Esophagus muscularis mucosa (tissue), 4 donors: ENCODE measurements at regions of chr19 and their contacts with region 1.

Region 1: GRCh38 chr19:10870955-10871603 is at the start of gene CARM1:
- DNase-seq: peak; percentile 99
- H3K4me3 ChIP-seq: peak within 1 kb of the TSS; percentile 83 to 96 (median 94)
- H3K27ac ChIP-seq: peak within 1 kb of the TSS; percentile 86 to 89 (median 88)
- H3K4me1 ChIP-seq: peaks cover 15 to 51% (median 42%) of the 10 kb centered on the region in 4 donors
- H3K27me3 ChIP-seq: no peaks in the 10 kb centered on the region
- CTCF ChIP-seq: peak; percentile 57 to 93 (median 68)
- EP300 ChIP-seq: no peak
- POLR2A ChIP-seq: no peak
- total RNA-seq, gene CARM1: 24.9 to 43.5 (median 30.6) TPM

Region 2: DNA sequence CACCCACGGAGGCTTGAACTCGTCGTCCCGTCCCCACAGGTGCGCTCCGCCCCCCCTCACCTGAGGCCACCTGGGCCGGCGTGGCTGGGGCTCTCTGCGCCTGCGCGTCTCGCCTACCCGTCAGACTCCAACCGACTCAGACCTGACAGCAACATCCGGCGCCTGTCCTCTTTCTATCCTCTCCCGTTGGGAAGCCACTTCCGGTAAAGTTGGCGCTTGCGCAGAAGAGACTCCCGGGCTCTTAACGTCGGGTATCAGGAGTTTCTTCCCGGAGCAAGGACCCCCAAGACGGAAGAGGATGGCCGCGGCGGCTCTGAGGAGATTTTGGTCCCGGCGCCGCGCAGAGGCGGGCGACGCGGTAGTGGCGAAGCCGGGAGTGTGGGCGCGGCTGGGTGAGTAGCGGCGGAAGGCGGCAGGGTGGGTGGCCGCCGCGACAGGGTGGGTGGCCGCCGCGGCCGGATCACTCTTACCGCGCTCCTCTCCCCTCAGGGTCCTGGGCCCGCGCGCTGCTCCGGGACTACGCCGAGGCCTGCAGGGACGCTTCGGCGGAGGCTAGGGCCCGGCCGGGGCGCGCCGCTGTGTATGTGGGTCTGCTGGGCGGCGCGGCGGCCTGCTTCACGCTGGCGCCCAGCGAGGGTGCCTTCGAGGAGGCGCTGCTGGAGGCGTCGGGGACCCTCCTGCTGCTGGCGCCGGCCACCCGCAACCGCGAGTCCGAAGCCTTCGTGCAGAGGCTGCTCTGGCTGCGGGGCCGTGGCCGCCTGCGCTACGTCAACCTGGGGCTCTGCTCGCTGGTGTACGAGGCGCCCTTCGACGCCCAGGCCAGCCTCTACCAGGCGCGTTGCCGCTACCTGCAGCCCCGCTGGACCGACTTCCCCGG is 57.7 kb after region 1 on chr19 and contains the starts of genes TIMM29 and YIPF2:
- intact Hi-C with region 1: loop called (anchors 5 kb)
- DNase-seq: peak; percentile 98
- H3K4me3 ChIP-seq: peak within 1 kb of the TSS; percentile 93 to 100 (median 98)
- H3K27ac ChIP-seq: peak within 1 kb of the TSS; percentile 88 to 92 (median 90)
- H3K4me1 ChIP-seq: peaks cover 26 to 42% (median 34%) of the 10 kb centered on the region in 4 donors
- H3K27me3 ChIP-seq: no peaks in the 10 kb centered on the region
- CTCF ChIP-seq: peak in 1 of 3 experiments; percentile 40
- EP300 ChIP-seq: no peak
- POLR2A ChIP-seq: no peak
- total RNA-seq, gene TIMM29: 32.6 to 58.7 (median 45.9) TPM
- total RNA-seq, gene YIPF2: 23.3 to 50.1 (median 31.0) TPM